ENCODE measurements at regions of chr18 and their contacts with region 1.

Region 1: DNA sequence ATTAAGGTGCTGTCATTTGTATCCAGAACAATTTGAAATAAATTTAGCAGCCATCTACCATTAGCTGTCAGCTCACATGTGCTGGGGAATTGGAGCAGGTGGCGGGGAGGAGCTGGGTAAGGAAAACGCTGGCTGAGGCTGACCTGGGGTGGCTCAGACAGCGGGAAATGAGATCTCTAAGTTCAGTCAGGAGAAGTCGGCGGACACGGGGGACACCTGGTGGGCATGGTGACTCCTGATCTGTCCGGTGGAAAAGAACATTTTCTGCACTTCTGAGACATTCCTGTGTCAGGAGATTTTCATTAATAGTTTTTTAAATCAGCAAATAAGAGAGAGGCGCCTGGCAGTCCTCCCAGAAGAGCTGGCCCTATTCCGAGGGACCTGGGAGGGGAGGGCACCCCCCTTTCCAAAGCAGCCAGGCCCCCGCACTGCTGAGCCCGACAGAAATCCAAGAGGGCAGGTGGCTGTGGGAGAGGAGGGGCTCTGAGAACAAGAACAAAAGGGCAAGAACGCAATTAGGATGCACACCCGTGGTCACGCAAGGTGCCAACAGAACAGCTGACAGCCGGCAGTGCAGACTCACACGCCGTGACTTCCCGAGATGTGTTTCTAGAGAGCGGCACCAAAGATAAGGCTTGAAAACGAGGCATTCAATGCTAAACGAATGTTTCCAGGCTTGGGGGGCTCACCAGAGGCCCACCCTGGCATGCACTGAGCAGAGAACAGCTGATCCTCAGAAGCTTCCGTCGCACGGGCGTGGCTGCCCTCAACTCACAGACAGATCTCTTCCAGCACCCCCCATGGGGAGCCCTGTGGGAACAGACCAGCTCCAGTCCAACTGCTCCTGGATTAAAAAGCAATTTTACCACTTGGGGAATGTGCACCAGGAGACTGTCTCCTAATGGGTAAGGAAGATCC is 26.4 kb downstream of the SLC66A2 start:
- DNase-seq: peak; percentile 80 to 87
- ATAC-seq: peak; percentile 87 to 91
- H3K4me3 ChIP-seq: peak overlapping the region in 2 of 4 donors; percentile 33 to 37
- H3K27ac ChIP-seq: peak overlapping the region; percentile 84 to 92 (median 86)
- H3K4me1 ChIP-seq: peaks cover 37 to 49% of the 10 kb centered on the region in 2 donors
- H3K27me3 ChIP-seq: no peaks in the 10 kb centered on the region
- CTCF ChIP-seq: peak; percentile 12 to 36 (median 27)
- POLR2A ChIP-seq: peak in 1 of 2 donors; percentile 23

Region 2: GRCh38 chr18:79720355-79720733 is 204.7 kb before region 1 on chr18:
- in situ Hi-C with region 1: no loop called
- intact Hi-C with region 1: loop called (anchors 10 kb)
- DNase-seq: no peak
- ATAC-seq: no peak
- H3K4me3 ChIP-seq: no peak overlapping the region
- H3K27ac ChIP-seq: no peak overlapping the region
- H3K4me1 ChIP-seq: no peaks in the 10 kb centered on the region
- H3K27me3 ChIP-seq: no peaks in the 10 kb centered on the region
- CTCF ChIP-seq: no peak
- POLR2A ChIP-seq: no peak

Measured in gastrocnemius medialis (tissue), 4 donors.